ENCODE measurements at regions of chr9 and their contacts with region 1.

Region 1: DNA sequence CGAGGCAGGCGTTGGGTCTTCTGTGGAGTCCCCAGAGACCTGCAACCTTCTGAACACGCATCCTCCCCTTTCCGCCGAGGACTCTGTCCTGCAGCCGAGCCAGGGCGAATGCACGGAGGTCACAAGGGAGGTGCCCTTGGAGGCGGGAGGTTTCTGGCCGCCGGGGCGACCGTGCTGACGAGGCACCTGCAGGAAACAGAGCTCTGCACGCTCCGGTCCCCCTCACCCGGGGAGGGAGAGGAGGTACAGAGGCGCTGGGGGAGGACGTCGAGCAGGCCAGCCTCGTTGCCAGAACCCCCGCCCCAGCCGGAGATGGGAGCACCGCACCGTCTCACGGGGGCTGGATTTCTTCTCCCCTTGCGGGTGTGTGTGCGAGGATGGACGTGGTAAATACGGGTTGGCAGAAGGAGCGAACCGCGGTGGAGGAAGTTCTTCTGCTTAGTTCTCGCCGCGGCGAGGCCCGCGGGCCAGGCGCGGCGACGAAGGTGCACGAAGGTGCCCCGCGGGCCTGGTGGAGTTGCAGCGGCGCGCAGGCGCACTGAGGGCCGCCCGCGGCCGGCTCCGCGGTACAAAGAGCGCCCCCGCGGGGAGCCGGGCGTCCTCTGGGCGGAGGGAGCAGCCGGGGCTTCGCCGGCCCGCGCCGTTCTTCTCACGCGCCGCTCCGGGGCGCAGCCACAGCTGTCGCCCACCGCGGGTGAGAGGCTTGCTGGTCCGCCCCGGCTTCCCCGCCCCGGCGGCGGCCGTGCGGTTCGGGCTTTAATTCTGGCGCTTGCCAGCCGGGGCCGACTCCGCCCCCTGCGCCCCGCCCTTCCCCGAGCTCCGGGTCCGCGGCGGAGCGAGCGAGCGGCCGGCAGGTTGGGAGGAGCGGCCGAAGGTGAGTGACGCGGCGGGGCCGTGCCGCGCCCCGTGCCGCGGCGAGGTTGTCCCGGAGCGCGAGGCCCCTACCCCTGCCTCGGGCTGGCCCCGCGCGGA is 289.5 kb downstream of the DOCK8 start:
- DNase-seq: peak; percentile 91
- ATAC-seq: peak; percentile 87

Region 2: GRCh38 chr9:589723-590122 is 85.6 kb after region 1 on chr9:
- intact Hi-C with region 1: loop called (anchors 10 kb)
- DNase-seq: no peak
- ATAC-seq: peak; percentile 51

Region 3: DNA sequence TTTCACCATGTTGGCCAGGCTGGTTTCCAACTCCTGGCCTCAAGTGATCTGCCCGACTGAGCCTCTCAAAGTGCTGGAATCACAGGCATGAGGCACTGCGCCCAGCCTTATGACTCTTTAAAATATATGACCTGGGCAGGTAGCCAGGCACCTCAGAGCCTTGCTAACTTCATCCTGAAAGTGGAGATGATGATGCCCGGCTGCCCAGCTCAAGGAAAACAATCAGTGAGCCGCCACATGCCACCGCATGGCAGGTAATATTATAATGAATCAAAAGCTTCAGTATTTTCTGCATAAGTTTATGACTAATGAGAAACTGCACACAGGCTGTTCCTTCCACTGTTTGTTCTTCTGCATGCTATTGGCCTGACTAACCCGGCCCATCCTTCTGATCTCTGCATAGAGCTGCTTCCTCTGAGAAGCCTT is 307.0 kb after region 1 on chr9:
- intact Hi-C with region 1: no loop called
- DNase-seq: peak; percentile 59
- ATAC-seq: peak; percentile 77